ENCODE measurements at regions of chr17 and their contacts with region 1.

Region 1: GRCh38 chr17:39153599-39154051 is 2.2 kb upstream of the PLXDC1 start:
- DNase-seq: peak; percentile 94 to 97
- ATAC-seq: peak; percentile 96
- H3K4me3 ChIP-seq: peak overlapping the region; percentile 52 to 61
- H3K27ac ChIP-seq: peak overlapping the region in 1 of 2 donors; percentile 61
- H3K4me1 ChIP-seq: no peaks in the 10 kb centered on the region
- H3K27me3 ChIP-seq: no peaks in the 10 kb centered on the region

Region 2: GRCh38 chr17:38674749-38675615 is 478.6 kb before region 1 on chr17 and contains the start of gene EPOP:
- intact Hi-C with region 1: loop called in 1 of 2 experiments (anchors 10 kb)
- DNase-seq: peak; percentile 92 to 97
- ATAC-seq: peak; percentile 92
- H3K4me3 ChIP-seq: peak within 1 kb of the TSS; percentile 5 to 61
- H3K27ac ChIP-seq: no peak within 1 kb of the TSS
- H3K4me1 ChIP-seq: no peaks in the 10 kb centered on the region
- H3K27me3 ChIP-seq: no peaks in the 10 kb centered on the region
- total RNA-seq, gene EPOP: 1.3 to 1.5 TPM

Region 3: GRCh38 chr17:38729886-38730525 is 423.6 kb before region 1 on chr17 and contains the start of gene CISD3:
- intact Hi-C with region 1: loop called in 1 of 2 experiments (anchors 10 kb)
- DNase-seq: peak; percentile 91 to 96
- ATAC-seq: peak; percentile 93
- H3K4me3 ChIP-seq: peak within 1 kb of the TSS; percentile 50 to 69
- H3K27ac ChIP-seq: peak within 1 kb of the TSS in 1 of 2 donors; percentile 84
- H3K4me1 ChIP-seq: no peaks in the 10 kb centered on the region
- H3K27me3 ChIP-seq: no peaks in the 10 kb centered on the region
- total RNA-seq, gene CISD3: 18.3 to 18.8 TPM

Region 4: DNA sequence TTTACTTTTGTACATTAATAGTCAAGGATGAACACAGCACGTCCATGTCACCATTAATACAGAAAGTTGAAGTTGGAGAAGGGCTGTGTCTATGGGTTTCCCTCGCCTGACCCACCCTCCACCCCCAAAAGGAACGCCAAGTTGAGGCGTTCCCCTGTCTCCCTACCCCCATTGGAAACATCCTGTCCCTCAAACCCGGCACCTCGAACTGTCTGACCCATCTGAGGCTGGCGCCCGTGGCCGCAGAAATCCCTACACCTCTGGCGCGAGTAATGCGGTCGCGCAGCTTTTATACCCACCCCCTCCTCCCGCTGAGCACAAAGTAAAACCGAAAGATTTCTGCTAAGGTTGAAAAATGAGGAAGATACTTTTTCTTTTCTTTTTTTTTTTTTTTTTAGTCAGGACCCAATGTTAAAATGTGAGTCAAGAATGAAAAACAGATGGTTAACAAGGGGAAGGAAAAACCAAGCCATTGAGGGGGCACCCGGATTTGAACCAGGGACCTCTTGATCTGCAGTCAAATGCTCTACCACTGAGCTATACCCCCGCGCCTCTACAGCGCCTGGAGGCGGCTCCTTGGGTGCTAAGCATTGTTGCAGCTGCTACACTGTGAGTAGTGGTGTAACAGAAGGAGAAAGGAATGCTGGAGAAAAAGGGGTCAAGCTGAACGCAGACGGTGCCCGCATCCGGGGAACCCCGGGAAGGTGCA is 284.7 kb before region 1 on chr17:
- intact Hi-C with region 1: loop called (anchors 1 to 10 kb)
- DNase-seq: peak; percentile 90 to 95
- ATAC-seq: peak; percentile 88
- H3K4me3 ChIP-seq: peak overlapping the region; percentile 61 to 77
- H3K27ac ChIP-seq: peak overlapping the region; percentile 69 to 85
- H3K4me1 ChIP-seq: peaks cover 0 to 5% of the 10 kb centered on the region in 2 donors
- H3K27me3 ChIP-seq: no peaks in the 10 kb centered on the region

Region 5: DNA sequence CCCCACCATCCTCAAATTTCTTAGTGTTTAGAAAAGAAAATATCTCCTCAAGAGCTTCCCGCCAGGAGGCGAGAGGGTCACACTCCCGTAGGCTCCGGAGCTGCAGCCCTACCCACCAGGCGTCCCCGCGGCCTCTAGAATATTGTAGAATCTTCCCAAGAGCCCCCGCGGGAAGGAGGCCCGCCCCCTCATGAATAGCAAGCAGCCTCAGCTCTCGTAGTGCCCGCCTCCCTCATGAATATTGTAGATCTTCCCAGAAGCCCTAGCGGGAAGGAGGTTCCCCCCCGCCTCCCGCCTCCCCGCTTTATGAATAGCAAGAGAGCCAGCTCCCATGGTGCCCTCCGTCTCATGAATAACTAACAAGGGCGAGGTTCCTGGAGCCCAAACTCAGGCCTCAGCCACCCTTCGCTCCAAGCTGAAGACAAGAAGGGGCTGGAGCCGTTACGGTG is 186.3 kb before region 1 on chr17 and contains the start of gene FBXO47:
- intact Hi-C with region 1: no loop called
- DNase-seq: peak; percentile 94 to 95
- ATAC-seq: peak; percentile 95
- H3K4me3 ChIP-seq: no peak within 1 kb of the TSS
- H3K27ac ChIP-seq: peak within 1 kb of the TSS in 1 of 2 donors; percentile 34
- H3K4me1 ChIP-seq: no peaks in the 10 kb centered on the region
- H3K27me3 ChIP-seq: no peaks in the 10 kb centered on the region
- total RNA-seq, gene FBXO47: not detected

Region 6: DNA sequence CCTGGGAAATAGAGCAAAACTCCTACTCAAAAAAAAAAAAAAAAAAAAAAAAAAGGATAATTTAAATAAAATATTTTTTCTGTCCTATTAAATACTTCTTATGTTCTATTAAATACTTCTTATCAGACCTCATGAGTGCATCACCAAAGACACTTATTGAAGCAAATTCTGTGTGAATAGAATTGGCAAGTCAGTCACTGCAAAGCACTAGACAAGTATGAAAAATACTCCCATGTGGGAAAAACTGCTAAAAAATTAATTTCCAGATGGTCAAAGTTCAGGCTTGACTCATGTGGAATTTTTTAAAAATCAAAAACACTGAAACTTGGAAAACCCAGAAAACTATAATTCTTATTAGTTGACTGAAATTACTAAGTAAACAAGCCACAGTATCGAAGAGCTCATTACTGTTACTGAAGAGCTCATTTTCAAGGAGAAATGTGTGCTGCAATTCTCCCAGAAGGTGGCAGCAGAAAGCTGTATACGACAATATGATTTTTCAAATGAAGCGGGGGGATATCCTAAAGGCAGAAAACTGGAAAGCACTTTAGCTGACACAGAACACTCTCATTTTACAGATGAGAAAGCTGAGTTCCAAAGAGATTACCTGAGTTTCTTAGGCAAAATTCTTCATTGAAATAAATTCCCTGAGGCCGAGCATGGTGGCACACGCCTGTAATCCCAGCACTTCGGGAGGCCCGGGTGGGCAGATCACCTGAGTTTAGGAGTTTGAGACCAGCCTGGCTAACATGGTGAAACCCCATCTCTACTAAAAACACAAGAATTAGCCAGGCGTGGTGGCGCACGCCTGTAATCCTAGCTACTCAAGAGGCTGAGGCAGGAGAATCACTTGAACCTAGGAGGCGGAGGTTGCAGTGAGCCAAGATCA is 170.5 kb before region 1 on chr17:
- intact Hi-C with region 1: loop called (anchors 1 to 2 kb)
- DNase-seq: no peak
- ATAC-seq: peak; percentile 82
- H3K4me3 ChIP-seq: no peak overlapping the region
- H3K27ac ChIP-seq: no peak overlapping the region
- H3K4me1 ChIP-seq: no peaks in the 10 kb centered on the region
- H3K27me3 ChIP-seq: no peaks in the 10 kb centered on the region

Region 7: GRCh38 chr17:39069114-39069756 is 84.4 kb before region 1 on chr17:
- intact Hi-C with region 1: loop called (anchors 5 kb)
- DNase-seq: no peak
- ATAC-seq: no peak
- H3K4me3 ChIP-seq: no peak overlapping the region
- H3K27ac ChIP-seq: no peak overlapping the region
- H3K4me1 ChIP-seq: peaks cover 0 to 3% of the 10 kb centered on the region in 2 donors
- H3K27me3 ChIP-seq: no peaks in the 10 kb centered on the region

Region 8: GRCh38 chr17:39118674-39119419 is 34.8 kb before region 1 on chr17:
- intact Hi-C with region 1: no loop called
- DNase-seq: no peak
- ATAC-seq: no peak
- H3K4me3 ChIP-seq: no peak overlapping the region
- H3K27ac ChIP-seq: no peak overlapping the region
- H3K4me1 ChIP-seq: no peaks in the 10 kb centered on the region
- H3K27me3 ChIP-seq: no peaks in the 10 kb centered on the region

Region 9: DNA sequence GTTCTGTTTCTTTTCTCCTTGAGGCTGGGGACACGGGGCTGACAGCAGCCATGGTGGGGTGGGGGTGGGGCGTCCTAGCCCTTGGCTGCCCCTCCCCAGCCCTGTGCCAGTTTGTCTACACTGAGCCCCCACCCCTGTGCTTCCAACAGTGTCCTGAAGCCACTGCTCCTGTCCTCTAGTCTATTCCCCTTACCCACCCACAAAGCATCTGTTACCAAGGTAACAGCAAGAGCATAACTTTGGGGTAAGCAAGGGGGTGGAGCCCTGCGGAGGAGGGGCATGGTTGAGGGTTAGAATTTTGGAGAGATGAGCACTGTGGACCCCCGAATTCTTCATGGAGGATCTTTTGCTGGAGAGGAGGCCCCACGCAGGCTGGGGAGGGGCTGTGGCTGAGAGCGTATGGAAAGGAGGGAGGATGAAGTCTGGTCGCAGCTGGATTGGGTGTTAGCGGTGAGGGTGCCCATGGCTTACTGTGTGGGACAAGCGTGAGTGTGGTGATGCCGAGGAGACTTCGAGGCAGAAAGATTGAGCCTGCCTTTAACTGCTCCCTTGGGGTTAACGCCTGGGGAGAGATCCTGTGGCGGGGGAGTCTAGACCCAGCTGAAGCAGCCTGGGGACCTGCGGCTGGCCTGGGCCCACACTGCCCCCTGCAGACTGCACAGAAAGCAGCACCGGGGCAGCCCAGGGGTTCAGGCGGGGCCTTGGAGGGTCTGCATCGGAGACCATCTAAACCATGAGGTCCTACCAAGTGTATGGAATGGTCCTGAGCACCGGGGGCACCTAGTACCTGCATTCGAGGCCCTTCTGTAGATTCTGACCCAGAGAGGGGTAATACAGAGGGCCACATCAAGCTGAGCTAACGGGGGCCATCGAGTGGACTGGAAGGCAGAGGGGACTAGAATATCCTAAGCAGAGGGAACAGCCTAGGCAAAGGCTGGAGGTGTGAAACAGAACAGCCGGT is 78.2 kb after region 1 on chr17:
- intact Hi-C with region 1: no loop called
- DNase-seq: peak; percentile 80 to 89
- ATAC-seq: peak; percentile 85
- H3K4me3 ChIP-seq: no peak overlapping the region
- H3K27ac ChIP-seq: no peak overlapping the region
- H3K4me1 ChIP-seq: no peaks in the 10 kb centered on the region
- H3K27me3 ChIP-seq: no peaks in the 10 kb centered on the region

Measured in aorta (tissue), 5 donors.